ENCODE measurements at regions of chr17 and their contacts with region 1.

Region 1: DNA sequence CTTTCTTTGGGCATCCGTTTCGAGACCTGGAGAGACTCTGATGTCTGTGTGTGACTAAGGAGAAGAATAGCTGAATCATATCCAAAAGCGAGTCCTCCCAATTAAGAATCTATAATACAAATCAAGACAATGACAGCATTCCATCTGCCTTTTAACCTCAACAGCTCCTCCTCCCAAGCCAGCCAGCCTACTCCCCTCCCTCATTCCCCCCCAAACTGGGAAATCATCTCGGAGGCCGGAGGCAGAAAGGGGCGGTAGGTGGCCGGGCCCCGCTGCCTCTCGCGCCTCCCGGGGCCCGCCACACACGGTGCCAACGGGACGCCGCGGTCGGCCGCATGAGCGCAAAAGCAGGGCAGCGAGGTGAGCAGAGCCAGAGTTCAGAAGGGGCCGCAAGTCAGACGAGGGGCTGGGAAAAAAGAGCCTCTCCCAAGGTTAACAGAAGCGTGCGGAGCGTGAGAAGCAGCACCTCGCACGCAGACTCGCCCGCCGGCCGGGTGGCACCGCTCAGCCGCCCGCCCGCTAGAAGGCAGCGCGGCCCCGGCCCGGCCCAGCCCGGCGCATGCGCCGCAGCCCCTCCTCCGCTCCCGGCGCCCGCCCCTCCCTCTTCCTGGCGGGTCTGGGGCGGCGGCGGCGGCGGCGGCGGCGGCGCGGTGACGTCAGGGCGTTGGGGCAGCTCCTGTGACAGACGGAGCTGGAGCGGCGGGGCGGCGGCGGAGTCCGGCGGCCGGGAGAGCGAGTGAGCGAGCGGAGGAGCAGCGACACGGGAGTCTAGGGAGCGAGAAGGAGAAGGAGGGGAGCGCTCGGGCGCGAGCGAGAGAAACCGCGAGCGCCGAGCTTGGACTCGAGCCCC is at the start of gene PAFAH1B1:
- DNase-seq: peak; percentile 94 to 99 (median 97)
- ATAC-seq: peak; percentile 90
- H3K4me3 ChIP-seq: peak within 1 kb of the TSS; percentile 69
- H3K4me3 Mint-ChIP-seq: peak within 1 kb of the TSS; percentile 87 to 97 (median 92)
- H3K27ac ChIP-seq: peak within 1 kb of the TSS; percentile 90
- H3K27ac Mint-ChIP-seq: peak within 1 kb of the TSS; percentile 85 to 96 (median 92)
- H3K4me1 ChIP-seq: peaks cover 23 to 31% of the 10 kb centered on the region in 2 donors
- H3K4me1 Mint-ChIP-seq: peaks cover 20 to 38% (median 28%) of the 10 kb centered on the region in 7 donors
- H3K27me3 ChIP-seq: no peaks in the 10 kb centered on the region
- H3K27me3 Mint-ChIP-seq: peaks cover 0 to 6% (median 0%) of the 10 kb centered on the region in 5 donors
- total RNA-seq, gene PAFAH1B1: 112 to 156 (median 140) TPM

Region 2: GRCh38 chr17:2511462-2512369 is 81.5 kb before region 1 on chr17 and contains the start of gene METTL16:
- CTCF ChIA-PET with region 1: no interaction called
- POLR2A ChIA-PET with region 1: interaction called, 10 read pairs
- intact Hi-C with region 1: loop called (anchors 1 kb)
- DNase-seq: peak; percentile 86 to 99 (median 95)
- ATAC-seq: peak; percentile 99
- H3K4me3 ChIP-seq: peak within 1 kb of the TSS; percentile 74
- H3K4me3 Mint-ChIP-seq: peak within 1 kb of the TSS in 2 of 10 donors; percentile 33 to 55
- H3K27ac ChIP-seq: peak within 1 kb of the TSS; percentile 89
- H3K27ac Mint-ChIP-seq: peak within 1 kb of the TSS in 2 of 9 donors; percentile 32 to 77
- H3K4me1 ChIP-seq: peaks cover 9 to 14% of the 10 kb centered on the region in 2 donors
- H3K4me1 Mint-ChIP-seq: peaks cover 13 to 22% (median 15%) of the 10 kb centered on the region in 7 donors
- H3K27me3 ChIP-seq: no peaks in the 10 kb centered on the region
- H3K27me3 Mint-ChIP-seq: no peaks in the 10 kb centered on the region
- total RNA-seq, gene METTL16: 33.5 to 67.7 (median 52.7) TPM

Region 3: DNA sequence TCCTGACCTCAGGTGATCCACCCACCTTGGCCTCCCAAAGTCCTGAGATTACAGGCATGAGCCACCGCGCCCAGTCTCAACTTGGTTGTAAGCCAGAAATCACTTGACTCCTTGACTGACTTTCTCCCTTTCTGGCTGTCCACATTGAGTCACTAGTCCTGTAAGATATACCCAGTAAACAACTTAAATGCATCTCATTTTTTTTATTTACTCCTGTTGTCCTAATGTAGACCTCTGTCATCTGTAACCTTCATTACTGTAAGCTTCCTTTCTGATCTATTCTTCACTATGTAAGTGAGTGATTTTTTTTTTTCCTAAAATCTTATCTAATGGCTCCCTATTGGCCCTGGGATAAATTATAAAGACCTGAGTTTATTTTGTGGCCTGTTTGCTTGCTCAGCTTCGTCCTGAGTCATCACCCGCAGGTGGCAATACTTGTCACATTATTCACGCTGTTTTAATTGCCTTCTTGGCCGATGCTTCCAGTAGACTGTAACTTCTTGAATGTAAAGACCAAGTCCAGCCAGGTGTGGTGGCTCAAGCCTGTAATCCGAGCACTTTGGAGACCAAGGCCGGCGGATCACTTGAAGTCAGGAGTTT is 41.3 kb after region 1 on chr17:
- CTCF ChIA-PET with region 1: interaction called, 3 read pairs
- POLR2A ChIA-PET with region 1: no interaction called
- intact Hi-C with region 1: loop called in 1 of 2 experiments (anchors 5 kb)
- DNase-seq: no peak
- ATAC-seq: no peak
- H3K4me3 ChIP-seq: no peak overlapping the region
- H3K4me3 Mint-ChIP-seq: peak overlapping the region in 1 of 10 donors; percentile 27
- H3K27ac ChIP-seq: no peak overlapping the region
- H3K27ac Mint-ChIP-seq: peak overlapping the region in 6 of 9 donors; percentile 0 to 72 (median 40)
- H3K4me1 ChIP-seq: peaks cover 4 to 7% of the 10 kb centered on the region in 2 donors
- H3K4me1 Mint-ChIP-seq: peaks cover 41 to 81% (median 64%) of the 10 kb centered on the region in 7 donors
- H3K27me3 ChIP-seq: no peaks in the 10 kb centered on the region
- H3K27me3 Mint-ChIP-seq: no peaks in the 10 kb centered on the region

Region 4: DNA sequence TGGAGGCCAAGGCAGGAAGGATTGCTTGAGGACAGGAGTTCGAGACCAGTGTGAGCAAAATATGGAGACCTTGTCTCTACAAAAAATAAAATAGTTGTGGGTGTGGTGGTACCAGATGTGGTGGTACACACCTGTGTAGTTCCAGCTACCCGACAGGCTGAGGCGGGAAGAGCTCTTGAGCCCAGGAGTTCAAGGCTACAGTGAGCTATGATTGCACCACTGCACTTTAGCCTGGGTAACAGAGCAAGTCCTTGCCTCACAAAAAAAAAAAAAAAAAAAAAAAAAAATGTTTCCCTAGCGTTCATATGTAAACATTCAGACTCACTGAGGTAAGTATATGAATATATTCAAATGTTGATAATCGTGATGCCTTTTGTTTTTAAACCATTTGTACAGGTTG is 78.8 kb after region 1 on chr17:
- CTCF ChIA-PET with region 1: interaction called, 5 read pairs
- POLR2A ChIA-PET with region 1: interaction called, 4 read pairs
- intact Hi-C with region 1: loop called (anchors 1 kb)
- DNase-seq: no peak
- ATAC-seq: no peak
- H3K4me3 ChIP-seq: no peak overlapping the region
- H3K4me3 Mint-ChIP-seq: no peak overlapping the region
- H3K27ac ChIP-seq: peak overlapping the region; percentile 12
- H3K27ac Mint-ChIP-seq: peak overlapping the region in 1 of 9 donors; percentile 61
- H3K4me1 ChIP-seq: no peaks in the 10 kb centered on the region
- H3K4me1 Mint-ChIP-seq: peaks cover 2 to 6% (median 5%) of the 10 kb centered on the region in 7 donors
- H3K27me3 ChIP-seq: no peaks in the 10 kb centered on the region
- H3K27me3 Mint-ChIP-seq: no peaks in the 10 kb centered on the region